ENCODE measurements at regions of chr21 and their contacts with region 1.

Region 1: DNA sequence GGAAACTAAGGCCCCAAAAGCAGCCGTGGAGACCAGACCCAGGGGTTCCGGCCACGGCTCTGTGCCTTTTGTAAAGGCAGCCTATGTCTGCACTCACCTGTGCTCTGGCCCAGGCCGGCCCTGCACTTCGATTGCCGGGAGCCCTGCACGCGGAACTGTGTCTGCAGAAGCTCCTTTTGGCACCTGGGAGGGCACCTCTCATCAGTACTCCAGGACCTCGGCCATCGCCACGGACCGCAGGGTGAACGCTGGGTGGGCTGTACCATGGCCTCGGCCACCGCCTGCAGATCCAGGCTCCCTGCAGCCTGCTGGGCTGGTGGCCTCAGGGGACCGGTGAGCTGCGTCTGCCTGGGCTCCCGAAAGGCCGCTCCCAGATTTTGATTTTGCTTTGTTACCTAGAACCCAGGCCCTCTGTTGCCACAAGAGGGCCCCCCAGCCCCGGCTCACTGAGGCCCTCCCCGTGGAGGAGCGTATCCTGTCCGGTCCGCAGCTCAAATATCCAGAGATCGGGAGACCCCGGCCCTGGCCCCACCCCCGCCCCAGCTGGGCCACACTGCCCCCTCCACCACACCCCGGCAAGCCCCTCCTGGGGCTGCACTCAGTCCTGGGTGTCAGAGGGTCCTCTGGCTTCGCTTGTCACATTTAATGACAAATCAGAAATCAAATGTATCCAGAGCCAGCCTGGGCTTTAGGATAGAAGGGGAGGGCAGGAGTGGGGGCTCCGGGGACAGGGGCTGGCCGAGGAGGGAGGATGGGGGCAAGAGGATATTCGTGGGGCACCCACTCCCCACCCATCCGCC is 60.2 kb upstream of the PDE9A start:
- DNase-seq: peak; percentile 84
- ATAC-seq: peak; percentile 96
- H3K4me3 Mint-ChIP-seq: no peak overlapping the region
- H3K27ac Mint-ChIP-seq: no peak overlapping the region
- H3K4me1 Mint-ChIP-seq: peaks cover 14% of the 10 kb centered on the region
- H3K27me3 Mint-ChIP-seq: peaks cover 21% of the 10 kb centered on the region
- CTCF ChIP-seq: peak; percentile 61

Region 2: GRCh38 chr21:42449296-42449927 is 143.8 kb before region 1 on chr21:
- CTCF ChIA-PET with region 1: no interaction called
- POLR2A ChIA-PET with region 1: no interaction called
- DNase-seq: no peak
- ATAC-seq: peak; percentile 4; the same call in 1 of the 2 replicates
- H3K4me3 Mint-ChIP-seq: no peak overlapping the region
- H3K27ac Mint-ChIP-seq: no peak overlapping the region; the same call in 1 of the 2 replicates
- H3K4me1 Mint-ChIP-seq: peaks cover 18% of the 10 kb centered on the region
- H3K27me3 Mint-ChIP-seq: no peaks in the 10 kb centered on the region; the same call in 1 of the 2 replicates
- CTCF ChIP-seq: no peak

Region 3: DNA sequence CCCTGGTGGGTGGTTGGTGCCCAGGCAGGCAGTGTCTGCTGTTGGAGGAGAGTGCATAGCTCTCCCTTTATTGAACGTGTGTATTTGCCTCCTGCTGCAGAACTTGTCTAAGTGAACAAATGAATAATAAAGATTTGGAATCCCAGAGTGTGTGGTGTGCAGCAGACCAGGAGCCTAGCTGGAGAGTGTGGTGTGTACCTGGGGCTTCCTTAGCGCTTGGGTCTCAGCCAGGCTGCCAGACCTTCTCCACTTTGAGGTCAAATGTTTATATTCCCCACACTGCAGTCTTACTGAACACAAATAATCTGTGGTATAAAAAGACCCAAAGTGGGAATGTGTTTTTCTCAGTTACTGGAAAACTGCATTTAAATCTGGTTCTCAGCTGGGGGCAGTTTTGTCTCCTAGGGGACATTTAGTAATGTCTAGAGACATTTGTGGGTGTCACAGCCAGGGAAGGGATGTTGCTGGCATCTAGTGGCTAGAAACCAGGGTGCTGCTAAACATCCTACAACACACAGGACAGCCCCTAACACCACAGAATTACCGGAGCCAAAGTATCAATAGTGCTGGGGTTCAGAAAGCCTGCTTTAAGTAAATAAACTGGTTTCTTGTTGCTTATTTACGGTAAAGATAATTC is 56.0 kb before region 1 on chr21:
- CTCF ChIA-PET with region 1: interaction called, 10 read pairs
- POLR2A ChIA-PET with region 1: interaction called, 3 read pairs
- DNase-seq: peak; percentile 2
- ATAC-seq: no peak
- H3K4me3 Mint-ChIP-seq: no peak overlapping the region
- H3K27ac Mint-ChIP-seq: no peak overlapping the region
- H3K4me1 Mint-ChIP-seq: peaks cover 10% of the 10 kb centered on the region
- H3K27me3 Mint-ChIP-seq: no peaks in the 10 kb centered on the region
- CTCF ChIP-seq: no peak

Region 4: GRCh38 chr21:42617486-42617885 is 24.3 kb after region 1 on chr21:
- CTCF ChIA-PET with region 1: interaction called, 12 read pairs
- POLR2A ChIA-PET with region 1: no interaction called
- DNase-seq: no peak
- ATAC-seq: no peak
- H3K4me3 Mint-ChIP-seq: no peak overlapping the region
- H3K27ac Mint-ChIP-seq: no peak overlapping the region
- H3K4me1 Mint-ChIP-seq: peaks cover 11% of the 10 kb centered on the region; the same call in 1 of the 2 replicates
- H3K27me3 Mint-ChIP-seq: peaks cover 16% of the 10 kb centered on the region
- CTCF ChIP-seq: no peak

Region 5: DNA sequence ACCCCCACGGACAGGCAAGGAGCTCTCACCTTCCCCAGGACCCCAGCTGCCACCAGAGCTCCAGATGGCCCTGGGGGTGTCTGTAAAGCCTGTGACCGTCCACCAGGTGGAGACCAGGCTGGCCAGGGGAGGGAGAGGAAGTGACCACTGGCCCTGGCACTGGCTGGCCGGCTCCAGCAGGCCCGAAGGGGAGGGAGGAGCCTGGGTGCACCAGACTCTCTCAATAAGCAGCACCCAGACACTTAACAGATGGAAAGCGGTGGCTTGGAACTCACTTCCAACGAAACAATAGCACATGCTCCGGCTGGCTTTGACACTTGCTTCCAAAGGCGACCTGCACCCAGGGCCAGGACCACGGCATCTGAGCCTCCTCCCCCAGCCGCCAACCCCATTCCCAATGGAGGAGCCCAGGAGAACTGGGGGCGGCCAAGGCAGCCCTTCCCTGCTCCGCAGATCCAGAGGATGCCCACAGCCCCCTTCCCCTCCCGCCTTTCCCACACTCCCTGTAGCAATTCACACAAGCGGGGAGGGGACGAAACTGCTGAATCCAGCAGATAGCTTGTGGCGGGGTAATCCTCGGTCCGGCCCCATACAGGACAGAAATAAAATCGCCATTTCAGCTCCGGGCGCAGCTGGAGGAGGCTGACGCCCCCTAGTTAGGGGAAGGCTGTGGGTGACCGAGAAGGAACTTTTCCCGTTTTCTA is 59.5 kb after region 1 on chr21:
- CTCF ChIA-PET with region 1: interaction called, 66 read pairs
- POLR2A ChIA-PET with region 1: interaction called, 5 read pairs
- DNase-seq: peak; percentile 66
- ATAC-seq: peak; percentile 18
- H3K4me3 Mint-ChIP-seq: peak overlapping the region; percentile 87
- H3K27ac Mint-ChIP-seq: peak overlapping the region; percentile 88
- H3K4me1 Mint-ChIP-seq: peaks cover 40% of the 10 kb centered on the region
- H3K27me3 Mint-ChIP-seq: peaks cover 4% of the 10 kb centered on the region; the same call in 1 of the 2 replicates
- CTCF ChIP-seq: 0 out of 2 replicates have a peak, but pooled peaks have one; percentile 23

Region 6: DNA sequence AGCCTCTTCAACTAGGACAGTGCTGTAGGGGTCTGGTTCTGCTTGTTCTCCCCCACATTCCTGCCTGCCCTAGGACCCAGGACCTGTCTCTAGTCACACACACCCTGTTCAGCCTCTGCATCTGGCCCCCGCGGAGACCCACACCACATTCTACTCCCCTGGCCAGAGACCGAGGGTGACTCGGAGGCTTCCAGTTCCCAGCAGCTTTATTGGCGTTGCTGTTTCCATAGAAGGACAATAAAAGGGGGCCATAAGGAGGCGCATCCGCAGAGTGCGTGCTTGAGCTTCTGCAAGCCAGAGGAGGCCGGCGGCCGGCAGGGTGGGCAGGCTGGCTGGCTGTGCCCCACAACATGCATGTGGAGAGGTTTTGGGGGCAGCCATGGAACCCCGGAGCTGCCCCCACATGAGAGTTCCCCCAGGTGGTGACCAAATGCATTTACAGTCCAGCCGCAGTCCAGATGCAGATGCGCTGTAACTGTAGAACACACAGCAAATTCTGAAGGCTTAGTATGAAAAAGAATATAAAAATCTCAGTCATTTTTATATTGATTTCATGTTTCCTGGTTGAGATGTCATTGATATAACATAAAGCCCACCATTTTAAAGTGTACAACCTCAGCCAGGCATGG is 112.7 kb after region 1 on chr21:
- CTCF ChIA-PET with region 1: interaction called, 12 read pairs
- POLR2A ChIA-PET with region 1: no interaction called
- DNase-seq: no peak
- ATAC-seq: no peak
- H3K4me3 Mint-ChIP-seq: no peak overlapping the region
- H3K27ac Mint-ChIP-seq: no peak overlapping the region
- H3K4me1 Mint-ChIP-seq: peaks cover 31% of the 10 kb centered on the region
- H3K27me3 Mint-ChIP-seq: no peaks in the 10 kb centered on the region
- CTCF ChIP-seq: no peak

Region 7: GRCh38 chr21:42818328-42818749 is 225.1 kb after region 1 on chr21:
- CTCF ChIA-PET with region 1: interaction called, 13 read pairs
- POLR2A ChIA-PET with region 1: no interaction called
- DNase-seq: peak; percentile 69
- ATAC-seq: peak; percentile 92
- H3K4me3 Mint-ChIP-seq: no peak overlapping the region
- H3K27ac Mint-ChIP-seq: no peak overlapping the region
- H3K4me1 Mint-ChIP-seq: peaks cover 6% of the 10 kb centered on the region; the same call in 1 of the 2 replicates
- H3K27me3 Mint-ChIP-seq: peaks cover 16% of the 10 kb centered on the region
- CTCF ChIP-seq: peak; percentile 76